HCT116 (cell line): ENCODE measurements at regions of chr20 and their contacts with region 1.

Region 1: DNA sequence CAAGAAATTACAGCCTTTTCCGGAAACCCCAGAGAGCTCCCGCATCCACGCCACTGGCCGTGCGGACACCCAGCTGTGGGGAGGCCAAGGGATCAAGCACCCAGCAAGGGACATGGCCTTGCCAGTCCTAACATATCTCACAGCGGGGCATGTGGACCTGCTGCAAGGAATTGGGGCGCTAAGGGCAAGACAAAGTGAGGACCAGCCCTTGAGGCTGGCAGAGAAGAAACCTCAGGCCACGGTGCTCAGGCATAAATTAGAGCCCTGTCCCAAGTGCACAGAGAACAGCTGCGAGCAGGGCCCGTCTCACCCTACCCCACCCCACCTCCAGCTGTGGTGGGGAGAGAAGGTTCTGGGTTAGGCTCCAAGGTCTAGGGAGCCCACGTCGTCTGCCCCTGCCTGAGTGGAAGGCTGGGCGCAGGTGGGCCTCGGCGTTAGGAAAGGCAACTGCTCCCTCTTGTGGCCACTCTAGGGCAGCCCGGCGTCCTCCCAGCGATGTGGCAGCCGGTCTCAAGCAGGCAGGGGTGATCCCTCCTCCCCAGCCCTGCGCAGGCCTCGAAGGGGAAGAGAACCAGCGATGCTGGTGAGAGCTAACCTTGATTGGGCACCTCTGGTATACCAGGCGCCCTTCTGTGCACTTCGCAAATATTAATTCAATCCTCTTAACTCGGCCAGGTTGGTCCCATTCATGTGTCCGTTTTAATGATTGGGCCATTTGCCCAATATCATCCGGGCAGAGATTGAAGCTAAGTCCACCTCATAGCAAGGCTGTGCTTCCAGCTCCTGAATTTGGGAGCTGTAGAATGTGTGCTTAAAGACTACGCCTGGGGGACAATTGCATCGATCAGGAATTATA is 235.8 kb downstream of the NFATC2 start:
- DNase-seq: peak; percentile 62
- ATAC-seq: peak; percentile 100
- H3K4me3 ChIP-seq: no peak overlapping the region
- H3K27ac ChIP-seq: no peak overlapping the region; the same call in 1 of the 2 replicates
- H3K4me1 ChIP-seq: peaks cover 0 to 7% of the 10 kb centered on the region in 2 experiments; a peak in 1 of 4 replicates
- H3K27me3 ChIP-seq: no peaks in the 10 kb centered on the region
- CTCF ChIP-seq: peak; percentile 85 to 95 (median 88)
- POLR2A ChIP-seq: no peak
- RAD21 ChIP-seq: peak; percentile 99

Region 2: DNA sequence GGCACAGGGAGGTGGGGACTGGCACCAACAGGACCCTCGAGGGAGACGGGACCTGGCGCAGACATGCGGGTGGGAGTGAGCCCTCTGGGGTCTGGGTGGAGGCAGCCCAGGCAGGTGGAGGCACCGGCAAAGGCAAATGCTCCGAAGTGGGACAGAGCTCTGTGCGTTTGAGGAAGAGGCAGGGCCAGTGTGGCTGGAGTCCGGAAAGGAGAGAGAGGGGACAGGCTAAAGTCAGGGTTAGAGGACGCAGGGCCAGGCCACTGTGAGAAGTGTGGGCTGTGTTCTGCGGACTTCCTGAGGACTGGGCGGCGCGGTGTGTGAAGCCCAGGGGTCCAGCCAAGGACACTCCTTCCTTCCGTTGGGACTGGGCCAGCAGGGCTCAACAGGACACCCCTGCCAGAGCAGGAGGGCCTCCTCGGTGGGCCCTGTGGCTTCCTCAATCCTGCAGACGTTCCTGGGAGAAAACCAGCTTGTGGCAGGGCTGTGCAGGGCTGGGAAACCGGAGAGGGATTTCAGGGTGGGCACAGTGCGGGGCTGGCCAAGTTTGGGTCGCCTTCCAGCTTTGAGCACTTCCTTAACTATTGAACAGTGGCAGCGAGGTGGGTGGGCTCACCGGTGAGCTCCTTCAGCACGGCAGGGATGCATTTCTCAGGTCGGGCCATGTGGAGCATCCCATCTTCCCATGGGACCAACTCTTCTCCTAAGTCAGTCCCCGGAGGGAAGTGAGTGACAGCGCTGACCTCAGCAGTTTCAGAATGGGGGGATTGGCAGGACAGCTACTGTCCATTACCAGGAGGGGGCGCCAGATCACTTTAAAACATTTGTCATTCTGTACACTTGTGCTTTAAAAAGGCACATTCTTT is 325.6 kb before region 1 on chr20:
- CTCF ChIA-PET with region 1: interaction called, 16 read pairs
- POLR2A ChIA-PET with region 1: no interaction called
- RAD21 ChIA-PET with region 1: interaction called in 1 of 2 experiments, 3 read pairs
- intact Hi-C with region 1: no loop called
- DNase-seq: peak; percentile 41
- ATAC-seq: peak; percentile 76
- H3K4me3 ChIP-seq: no peak overlapping the region
- H3K27ac ChIP-seq: no peak overlapping the region
- H3K4me1 ChIP-seq: peaks cover 0 to 14% of the 10 kb centered on the region in 2 experiments; a peak in 2 of 4 replicates
- H3K27me3 ChIP-seq: no peaks in the 10 kb centered on the region
- CTCF ChIP-seq: peak; percentile 48 to 96 (median 85); a peak in 5 of 6 replicates
- POLR2A ChIP-seq: no peak
- RAD21 ChIP-seq: peak; percentile 75

Region 3: DNA sequence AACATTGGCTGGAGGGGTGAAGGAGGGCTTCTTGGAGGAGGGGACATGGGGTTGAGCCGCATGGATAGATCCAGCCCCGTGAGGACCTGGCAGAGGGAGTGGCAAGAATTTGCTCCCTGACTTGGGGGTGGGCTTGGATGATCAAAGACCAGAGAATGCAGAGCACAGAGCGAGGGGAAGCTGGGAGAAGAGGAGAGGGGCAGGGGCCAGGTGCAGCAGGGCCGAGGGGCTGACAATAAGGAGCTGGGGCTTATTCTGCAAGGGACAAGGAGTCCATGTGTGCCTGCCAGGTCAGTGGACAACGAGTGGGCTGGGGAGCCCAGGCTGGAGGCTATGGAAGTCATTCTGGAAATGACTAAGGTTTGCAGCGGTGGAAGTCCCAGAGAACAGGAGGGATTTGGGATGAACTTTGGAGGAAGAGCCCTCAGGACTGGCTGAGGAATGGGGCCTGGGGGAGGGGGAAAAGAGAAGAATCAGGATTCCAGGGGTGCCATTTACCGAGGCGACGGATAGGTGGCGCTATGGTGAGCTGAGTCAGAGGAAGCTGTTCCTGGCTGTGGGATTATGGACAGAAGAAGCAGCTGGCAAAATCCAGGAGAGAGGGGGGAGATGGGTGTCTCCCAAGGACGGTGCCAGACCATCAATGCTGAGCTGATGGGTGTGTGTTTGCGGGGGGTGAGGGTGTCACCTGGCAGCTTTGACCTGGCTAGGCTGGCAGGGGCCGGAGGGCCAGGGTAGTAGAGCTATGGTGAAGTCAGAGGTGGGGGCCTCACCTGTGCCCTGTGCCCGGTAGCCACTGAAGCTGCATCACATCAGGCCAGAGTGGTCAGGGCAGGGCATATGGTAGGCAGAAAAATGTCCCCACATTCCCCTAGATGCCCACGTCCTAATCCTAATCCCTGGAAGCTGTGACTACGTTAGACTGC is 291.7 kb before region 1 on chr20:
- CTCF ChIA-PET with region 1: interaction called, 25 read pairs
- POLR2A ChIA-PET with region 1: interaction called, 7 read pairs
- RAD21 ChIA-PET with region 1: interaction called, 3 to 5 read pairs
- intact Hi-C with region 1: loop called (anchors 1 kb)
- DNase-seq: no peak
- ATAC-seq: peak; percentile 93
- H3K4me3 ChIP-seq: no peak overlapping the region
- H3K27ac ChIP-seq: no peak overlapping the region
- H3K4me1 ChIP-seq: no peaks in the 10 kb centered on the region
- H3K27me3 ChIP-seq: no peaks in the 10 kb centered on the region
- CTCF ChIP-seq: peak; percentile 43 to 92 (median 83); a peak in 5 of 6 replicates
- POLR2A ChIP-seq: no peak
- RAD21 ChIP-seq: peak; percentile 71

Region 4: GRCh38 chr20:51172974-51173397 is 133.7 kb before region 1 on chr20:
- CTCF ChIA-PET with region 1: interaction called, 9 read pairs
- POLR2A ChIA-PET with region 1: no interaction called
- RAD21 ChIA-PET with region 1: no interaction called
- intact Hi-C with region 1: loop called (anchors 1 kb)
- DNase-seq: peak; percentile 41
- ATAC-seq: peak; percentile 88
- H3K4me3 ChIP-seq: no peak overlapping the region
- H3K27ac ChIP-seq: no peak overlapping the region
- H3K4me1 ChIP-seq: peaks cover 0 to 5% of the 10 kb centered on the region in 2 experiments; a peak in 2 of 4 replicates
- H3K27me3 ChIP-seq: no peaks in the 10 kb centered on the region
- CTCF ChIP-seq: peak; percentile 18 to 54 (median 41); a peak in 5 of 6 replicates
- POLR2A ChIP-seq: no peak
- RAD21 ChIP-seq: peak; percentile 45

Region 5: DNA sequence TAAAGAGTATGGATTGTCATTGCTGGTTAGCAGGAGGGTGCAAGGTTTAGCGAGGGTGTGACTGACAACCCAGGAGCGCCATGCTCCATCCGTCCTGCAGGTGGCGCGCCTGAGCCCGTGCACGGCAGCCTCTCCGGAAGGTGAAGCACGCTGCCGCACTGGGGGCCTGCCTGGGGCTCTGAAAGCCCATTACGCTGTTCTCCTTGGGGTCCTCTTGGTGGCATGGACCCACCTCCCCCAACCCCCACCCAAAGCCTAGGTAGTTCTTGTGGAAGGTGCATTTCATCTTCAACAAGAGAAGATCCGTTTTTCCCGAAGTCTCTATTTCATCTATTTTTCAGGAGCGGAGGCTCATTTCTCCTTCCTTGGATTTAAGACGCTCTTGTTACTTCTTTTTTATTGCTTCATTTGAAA is 86.4 kb before region 1 on chr20:
- CTCF ChIA-PET with region 1: interaction called, 6 read pairs
- POLR2A ChIA-PET with region 1: no interaction called
- RAD21 ChIA-PET with region 1: interaction called in 1 of 2 experiments, 3 read pairs
- intact Hi-C with region 1: loop called (anchors 1 kb)
- DNase-seq: no peak
- ATAC-seq: peak; percentile 96
- H3K4me3 ChIP-seq: no peak overlapping the region
- H3K27ac ChIP-seq: no peak overlapping the region
- H3K4me1 ChIP-seq: peaks cover 3 to 10% of the 10 kb centered on the region in 2 experiments; a peak in 2 of 4 replicates
- H3K27me3 ChIP-seq: no peaks in the 10 kb centered on the region; the same call in 1 of the 2 replicates
- CTCF ChIP-seq: peak; percentile 61 to 99 (median 95); a peak in 5 of 6 replicates
- POLR2A ChIP-seq: no peak
- RAD21 ChIP-seq: peak; percentile 68

Region 6: GRCh38 chr20:51318058-51318895 is 11.5 kb after region 1 on chr20:
- CTCF ChIA-PET with region 1: interaction called, 17 read pairs
- POLR2A ChIA-PET with region 1: no interaction called
- RAD21 ChIA-PET with region 1: no interaction called
- intact Hi-C with region 1: no loop called
- DNase-seq: peak; percentile 51
- ATAC-seq: peak; percentile 96
- H3K4me3 ChIP-seq: no peak overlapping the region
- H3K27ac ChIP-seq: no peak overlapping the region
- H3K4me1 ChIP-seq: peaks cover 0 to 7% of the 10 kb centered on the region in 2 experiments; a peak in 3 of 4 replicates
- H3K27me3 ChIP-seq: no peaks in the 10 kb centered on the region
- CTCF ChIP-seq: peak; percentile 72 to 94 (median 94); a peak in 5 of 6 replicates
- POLR2A ChIP-seq: no peak
- RAD21 ChIP-seq: peak; percentile 59

Region 7: DNA sequence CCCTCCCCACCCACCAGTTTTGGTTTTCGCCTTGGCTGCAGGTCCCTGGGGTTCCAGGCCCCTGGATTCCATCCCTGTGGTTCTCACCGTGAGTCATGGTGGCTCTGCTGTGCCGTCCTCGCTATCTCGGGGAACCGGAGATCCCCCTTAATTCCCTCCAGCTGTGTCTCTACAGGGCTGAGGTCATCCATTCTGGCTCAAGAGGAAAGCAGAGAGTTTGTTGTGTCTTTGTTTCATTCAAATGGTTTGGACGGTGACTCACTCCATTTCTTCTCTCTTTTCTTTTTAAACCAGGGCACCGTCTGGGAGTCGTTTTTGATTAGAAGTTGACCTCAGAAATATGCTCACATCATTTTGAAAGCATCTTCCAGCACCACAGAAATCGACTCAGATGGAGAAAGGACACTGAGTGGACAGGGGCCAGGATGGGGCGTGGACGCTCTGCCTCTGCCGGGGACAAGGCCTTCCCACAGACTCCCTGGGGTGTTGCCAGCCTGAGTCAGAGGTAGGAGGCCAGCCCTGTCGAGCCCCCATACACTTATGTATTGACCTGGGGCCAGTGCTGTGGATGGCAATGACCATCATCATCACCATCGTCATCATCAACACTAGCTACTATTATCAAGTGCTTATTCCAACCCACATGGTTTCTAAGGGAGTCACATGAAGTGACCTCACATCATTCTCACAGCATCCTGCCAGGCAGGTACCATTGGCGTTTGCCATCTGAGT is 59.6 kb after region 1 on chr20:
- CTCF ChIA-PET with region 1: no interaction called
- POLR2A ChIA-PET with region 1: no interaction called
- RAD21 ChIA-PET with region 1: no interaction called
- intact Hi-C with region 1: no loop called
- DNase-seq: peak; percentile 37
- ATAC-seq: peak; percentile 74
- H3K4me3 ChIP-seq: 0 out of 4 replicates have a peak overlapping the region, but pooled peaks of 1 of the 2 experiments have one; percentile 1
- H3K27ac ChIP-seq: peak overlapping the region; percentile 27
- H3K4me1 ChIP-seq: peaks cover 11 to 38% of the 10 kb centered on the region in 2 experiments
- H3K27me3 ChIP-seq: no peaks in the 10 kb centered on the region
- CTCF ChIP-seq: no peak
- POLR2A ChIP-seq: no peak
- RAD21 ChIP-seq: no peak

Region 8: GRCh38 chr20:51984931-51985415 is 678.2 kb after region 1 on chr20:
- CTCF ChIA-PET with region 1: no interaction called
- POLR2A ChIA-PET with region 1: no interaction called
- RAD21 ChIA-PET with region 1: no interaction called
- intact Hi-C with region 1: no loop called
- DNase-seq: peak; percentile 72
- ATAC-seq: peak; percentile 76
- H3K4me3 ChIP-seq: no peak overlapping the region
- H3K27ac ChIP-seq: peak overlapping the region; percentile 62
- H3K4me1 ChIP-seq: peaks cover 15 to 19% of the 10 kb centered on the region in 2 experiments
- H3K27me3 ChIP-seq: no peaks in the 10 kb centered on the region
- CTCF ChIP-seq: no peak
- POLR2A ChIP-seq: no peak
- RAD21 ChIP-seq: peak; percentile 13; the same call in 1 of the 2 replicates